HCT116 (cell line): ENCODE measurements at regions of chr1 and their contacts with region 1.

Region 1: DNA sequence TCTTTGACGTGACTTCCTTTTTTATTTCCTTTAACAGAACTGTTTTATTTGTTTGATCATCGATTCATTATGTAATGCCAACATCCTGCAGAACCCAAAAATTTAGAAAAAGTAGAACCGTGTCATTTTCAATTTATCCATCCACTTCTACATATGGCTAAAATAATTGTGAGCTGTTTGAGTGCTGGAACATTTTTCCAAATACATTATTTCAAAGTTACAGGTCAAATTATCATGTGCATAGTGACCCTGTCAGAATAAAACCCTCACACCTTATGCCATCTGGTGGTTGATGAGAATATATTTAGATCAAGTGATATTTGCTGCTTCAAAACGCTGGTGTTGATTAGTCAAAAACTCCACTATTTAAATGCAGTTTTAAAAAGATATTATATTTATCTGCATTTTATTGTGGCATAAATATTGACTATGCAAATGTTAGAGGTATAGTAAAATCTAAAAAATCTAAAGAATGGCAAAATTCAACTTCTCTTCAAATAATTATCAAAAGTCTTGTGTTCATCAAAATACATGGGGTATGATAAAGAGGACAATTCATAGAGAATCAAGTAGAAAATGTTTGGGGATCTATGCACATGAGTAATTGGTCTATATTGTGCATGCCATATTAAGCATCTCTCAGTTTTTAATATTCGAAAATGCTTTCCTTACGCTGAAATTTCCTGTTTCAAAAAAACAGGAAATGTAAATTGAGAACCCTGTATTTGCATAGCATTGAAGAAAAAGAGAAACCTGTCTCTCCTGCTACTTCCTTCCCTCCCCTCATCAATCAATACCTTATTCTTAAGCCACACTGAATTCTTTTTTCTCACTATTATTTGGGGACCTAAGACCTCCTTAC is 39.7 kb downstream of the UBE2U start:
- DNase-seq: peak; percentile 40
- ATAC-seq: peak; percentile 74
- H3K4me3 ChIP-seq: no peak overlapping the region
- H3K27ac ChIP-seq: no peak overlapping the region
- H3K4me1 ChIP-seq: no peaks in the 10 kb centered on the region
- H3K27me3 ChIP-seq: no peaks in the 10 kb centered on the region
- CTCF ChIP-seq: peak; percentile 48 to 77 (median 63)
- POLR2A ChIP-seq: no peak
- RAD21 ChIP-seq: peak; percentile 82

Region 2: GRCh38 chr1:62841587-62842169 is 1401.4 kb before region 1 on chr1:
- CTCF ChIA-PET with region 1: no interaction called
- POLR2A ChIA-PET with region 1: no interaction called
- RAD21 ChIA-PET with region 1: no interaction called
- intact Hi-C with region 1: loop called (anchors 5 kb)
- DNase-seq: peak; percentile 49
- ATAC-seq: peak; percentile 63
- H3K4me3 ChIP-seq: no peak overlapping the region
- H3K27ac ChIP-seq: no peak overlapping the region
- H3K4me1 ChIP-seq: no peaks in the 10 kb centered on the region
- H3K27me3 ChIP-seq: no peaks in the 10 kb centered on the region
- CTCF ChIP-seq: peak; percentile 47 to 69 (median 48); a peak in 5 of 6 replicates
- POLR2A ChIP-seq: no peak
- RAD21 ChIP-seq: peak; percentile 72

Region 3: GRCh38 chr1:63327417-63328139 is 915.5 kb before region 1 on chr1:
- CTCF ChIA-PET with region 1: no interaction called
- POLR2A ChIA-PET with region 1: no interaction called
- RAD21 ChIA-PET with region 1: no interaction called
- intact Hi-C with region 1: loop called (anchors 10 kb)
- DNase-seq: peak; percentile 60
- ATAC-seq: peak; percentile 98
- H3K4me3 ChIP-seq: peak overlapping the region in 1 of 2 experiments; percentile 9; a peak in 1 of 4 replicates
- H3K27ac ChIP-seq: no peak overlapping the region
- H3K4me1 ChIP-seq: peaks cover 0 to 10% of the 10 kb centered on the region in 2 experiments; a peak in 3 of 4 replicates
- H3K27me3 ChIP-seq: no peaks in the 10 kb centered on the region
- CTCF ChIP-seq: peak; percentile 60 to 86 (median 86)
- POLR2A ChIP-seq: no peak
- RAD21 ChIP-seq: peak; percentile 74

Region 4: DNA sequence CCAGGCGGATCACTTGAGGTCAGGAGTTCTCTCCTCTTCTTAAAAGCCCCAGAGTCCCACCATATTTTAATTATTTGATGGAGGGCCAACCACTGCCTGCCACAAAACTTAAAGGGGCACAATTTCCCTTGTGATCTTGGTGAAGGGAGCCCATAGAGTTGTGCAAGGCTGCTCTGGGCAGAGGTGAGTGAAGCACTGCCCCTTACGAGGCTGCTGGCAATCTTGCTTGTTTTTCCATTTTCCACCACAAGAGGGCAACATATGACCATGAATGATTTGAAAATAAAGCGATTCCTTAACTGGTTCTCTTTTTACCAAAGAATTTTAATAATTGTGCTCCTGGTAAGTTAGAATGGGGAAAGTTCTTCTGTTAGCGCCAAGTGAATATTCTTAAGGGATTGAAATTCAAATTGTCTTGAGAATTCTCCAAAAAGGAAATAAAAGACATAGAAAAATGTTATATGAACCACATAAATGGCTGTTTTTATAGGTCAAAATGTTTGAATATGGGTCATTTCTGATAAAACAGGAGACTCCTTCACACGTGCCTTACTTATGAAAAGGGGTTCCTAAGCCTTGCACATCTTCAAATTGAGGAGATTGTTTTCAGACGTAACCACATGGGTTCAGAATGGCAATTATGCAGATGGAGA is 627.2 kb before region 1 on chr1:
- CTCF ChIA-PET with region 1: interaction called, 15 read pairs
- POLR2A ChIA-PET with region 1: no interaction called
- RAD21 ChIA-PET with region 1: interaction called in 1 of 2 experiments, 3 read pairs
- intact Hi-C with region 1: loop called (anchors 1 kb)
- DNase-seq: peak; percentile 58
- ATAC-seq: peak; percentile 89
- H3K4me3 ChIP-seq: no peak overlapping the region
- H3K27ac ChIP-seq: no peak overlapping the region
- H3K4me1 ChIP-seq: peaks cover 0 to 4% of the 10 kb centered on the region in 2 experiments; a peak in 1 of 4 replicates
- H3K27me3 ChIP-seq: no peaks in the 10 kb centered on the region
- CTCF ChIP-seq: peak; percentile 58 to 83 (median 73); a peak in 5 of 6 replicates
- POLR2A ChIP-seq: no peak
- RAD21 ChIP-seq: peak; percentile 87

Region 5: GRCh38 chr1:63917571-63918417 is 325.3 kb before region 1 on chr1:
- CTCF ChIA-PET with region 1: interaction called, 4 read pairs
- POLR2A ChIA-PET with region 1: no interaction called
- RAD21 ChIA-PET with region 1: interaction called in 1 of 2 experiments, 3 read pairs
- intact Hi-C with region 1: loop called (anchors 2 kb)
- DNase-seq: peak; percentile 32
- ATAC-seq: peak; percentile 71
- H3K4me3 ChIP-seq: no peak overlapping the region
- H3K27ac ChIP-seq: no peak overlapping the region
- H3K4me1 ChIP-seq: peaks cover 0 to 15% of the 10 kb centered on the region in 2 experiments; a peak in 2 of 4 replicates
- H3K27me3 ChIP-seq: no peaks in the 10 kb centered on the region
- CTCF ChIP-seq: peak; percentile 32 to 72 (median 65); a peak in 5 of 6 replicates
- POLR2A ChIP-seq: no peak
- RAD21 ChIP-seq: peak; percentile 45; the same call in 1 of the 2 replicates

Region 6: DNA sequence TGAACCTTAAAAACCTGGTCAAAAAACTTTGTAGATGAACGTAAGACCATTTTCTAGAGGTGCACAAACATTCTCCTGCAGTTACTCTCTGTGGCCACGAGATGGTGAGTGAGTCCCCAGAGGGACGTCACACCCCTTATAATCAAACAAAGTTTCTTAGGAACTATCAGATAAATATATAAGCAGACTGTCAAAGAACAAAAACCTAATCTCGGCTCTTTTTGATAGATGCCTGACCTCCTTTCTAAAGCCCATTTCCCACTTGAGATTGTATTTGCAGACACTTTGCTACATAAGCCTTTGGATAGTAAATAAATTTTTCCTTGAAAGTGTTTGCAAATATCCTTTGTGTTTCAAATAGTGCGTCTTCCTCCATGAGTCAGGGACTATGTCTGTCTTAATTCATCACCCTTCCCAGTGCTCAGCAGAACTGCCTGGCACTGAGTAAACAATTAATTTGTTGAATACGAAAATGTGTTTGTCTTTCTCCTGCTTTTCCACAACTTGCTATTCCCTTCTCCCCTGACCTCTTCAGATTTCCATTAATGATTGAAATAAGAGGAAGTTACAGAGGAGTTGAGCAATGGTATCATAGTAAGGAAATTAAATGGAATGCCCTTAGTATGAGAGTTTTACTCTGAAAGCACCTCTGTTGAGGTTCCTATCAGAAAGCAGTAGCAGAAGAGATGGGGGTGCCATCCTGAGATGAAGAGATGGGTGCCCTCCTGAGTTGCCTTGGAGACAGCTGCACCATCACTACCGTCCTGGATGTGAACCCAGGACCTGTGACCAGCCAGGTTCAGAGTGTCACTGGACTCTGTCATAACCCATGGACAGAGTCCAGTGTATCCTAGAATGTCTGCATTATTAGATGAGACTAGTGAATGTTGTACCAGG is 443.9 kb after region 1 on chr1:
- CTCF ChIA-PET with region 1: no interaction called
- POLR2A ChIA-PET with region 1: no interaction called
- RAD21 ChIA-PET with region 1: no interaction called
- intact Hi-C with region 1: no loop called
- DNase-seq: peak; percentile 43
- ATAC-seq: peak; percentile 79
- H3K4me3 ChIP-seq: no peak overlapping the region
- H3K27ac ChIP-seq: no peak overlapping the region
- H3K4me1 ChIP-seq: no peaks in the 10 kb centered on the region
- H3K27me3 ChIP-seq: no peaks in the 10 kb centered on the region
- CTCF ChIP-seq: peak; percentile 74 to 83 (median 83)
- POLR2A ChIP-seq: no peak
- RAD21 ChIP-seq: peak; percentile 72